Activated CD8-positive, alpha-beta T cell treated with anti-CD3 and anti-CD28 coated beads, Interleukin-2, amount 10 ng/mL, durations not matched to agents 7 days and 5 days (primary cell): ENCODE measurements at regions of chr7 and their contacts with region 1.

Region 1: GRCh38 chr7:16645593-16646471 is at the starts of genes ANKMY2 and BZW2:
- DNase-seq: peak; percentile 95
- ATAC-seq: peak; percentile 91
- H3K4me3 Mint-ChIP-seq: peak within 1 kb of the TSS; percentile 98
- H3K27ac Mint-ChIP-seq: peak within 1 kb of the TSS; percentile 98
- H3K4me1 Mint-ChIP-seq: peaks cover 56% of the 10 kb centered on the region
- H3K27me3 Mint-ChIP-seq: no peaks in the 10 kb centered on the region
- total RNA-seq, gene ANKMY2: 14.3 to 14.5 TPM
- total RNA-seq, gene BZW2: 59.7 to 62.3 TPM

Region 2: DNA sequence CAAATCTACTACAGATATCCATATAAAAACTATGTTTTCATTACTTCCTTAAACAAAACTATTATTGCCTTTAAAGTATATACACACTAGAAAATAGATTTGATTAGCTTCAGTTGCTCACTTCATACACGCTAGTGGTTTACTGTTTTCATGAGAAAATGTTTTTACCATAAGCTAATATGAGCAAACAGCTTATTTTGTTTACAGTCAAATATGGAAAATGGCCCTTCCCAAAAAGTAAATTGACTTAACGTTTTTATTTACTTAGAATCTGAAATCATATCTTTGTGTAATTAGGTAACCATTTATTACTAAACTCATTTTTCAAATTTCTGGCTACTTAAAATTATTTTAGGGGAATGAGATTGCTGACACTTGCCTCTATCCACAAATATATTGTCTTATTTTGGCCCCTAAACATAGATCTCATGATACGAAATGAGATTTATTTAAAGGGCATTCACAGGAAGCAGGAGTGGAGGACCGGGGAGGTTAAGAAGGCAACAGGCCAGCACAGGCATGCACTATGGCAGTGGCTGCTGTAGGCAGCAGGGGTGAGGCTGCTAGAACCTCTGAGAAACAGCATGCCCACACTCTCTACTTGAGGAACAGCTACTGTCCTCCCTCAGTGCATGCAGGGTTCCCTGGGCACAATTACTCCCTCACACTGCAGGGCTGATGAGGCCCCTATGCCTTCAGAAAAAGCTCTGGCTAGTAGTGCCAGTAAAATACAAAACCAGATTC is 150.7 kb before region 1 on chr7:
- CTCF ChIA-PET with region 1: no interaction called
- POLR2A ChIA-PET with region 1: no interaction called
- DNase-seq: no peak
- ATAC-seq: no peak
- H3K4me3 Mint-ChIP-seq: no peak overlapping the region
- H3K27ac Mint-ChIP-seq: no peak overlapping the region
- H3K4me1 Mint-ChIP-seq: peaks cover 7% of the 10 kb centered on the region
- H3K27me3 Mint-ChIP-seq: peaks cover 2% of the 10 kb centered on the region

Region 3: GRCh38 chr7:16684935-16685334 is 39.1 kb after region 1 on chr7:
- CTCF ChIA-PET with region 1: interaction called, 3 read pairs
- POLR2A ChIA-PET with region 1: interaction called, 10 read pairs
- DNase-seq: no peak
- ATAC-seq: peak; percentile 53
- H3K4me3 Mint-ChIP-seq: no peak overlapping the region
- H3K27ac Mint-ChIP-seq: peak overlapping the region; percentile 84
- H3K4me1 Mint-ChIP-seq: peaks cover 22% of the 10 kb centered on the region
- H3K27me3 Mint-ChIP-seq: no peaks in the 10 kb centered on the region